Natural killer cell (primary cell): ENCODE measurements at regions of chr10 and their contacts with region 1.

Region 1: DNA sequence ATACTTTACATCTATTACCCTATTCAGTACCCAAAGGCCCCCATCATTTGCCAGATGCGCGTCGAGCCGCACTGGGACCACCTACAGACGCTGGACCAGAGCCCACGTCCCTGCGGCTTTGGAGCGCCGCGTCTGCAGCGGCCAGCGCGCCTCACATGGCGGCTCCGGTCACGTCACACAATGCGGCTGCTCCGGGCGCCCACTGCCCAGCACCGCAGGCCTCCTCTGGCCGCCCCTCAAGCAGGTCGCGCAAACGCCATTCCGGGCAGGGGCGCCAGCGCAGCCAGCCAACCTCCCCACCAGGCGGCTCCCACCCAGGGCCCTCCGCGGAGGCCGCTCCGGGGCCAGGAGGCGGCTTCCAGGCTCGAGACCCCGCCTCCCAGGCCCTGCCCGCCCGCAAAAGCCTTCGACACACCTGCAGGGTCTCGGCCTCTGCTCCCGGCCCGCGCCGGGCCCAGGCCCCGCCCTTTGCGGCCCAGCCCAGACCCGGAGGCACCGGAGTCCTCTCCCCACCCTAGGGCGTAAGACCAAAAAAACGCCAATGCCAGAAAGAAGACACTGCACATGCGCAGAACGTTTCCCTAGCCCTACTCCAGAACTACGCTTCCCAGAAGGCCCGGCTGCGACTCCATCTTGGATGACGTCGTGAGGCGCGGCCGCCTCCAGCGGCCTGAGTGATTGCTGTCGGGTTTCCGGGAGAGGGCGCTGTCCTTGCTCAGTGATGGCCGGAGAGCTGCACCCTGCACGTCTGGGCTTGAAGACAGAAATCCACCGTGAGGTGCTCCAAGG is at the start of gene ZNF25:
- DNase-seq: peak; percentile 90 to 100
- ATAC-seq: peak; percentile 92 to 98 (median 94)
- H3K4me3 ChIP-seq: peak within 1 kb of the TSS; percentile 51
- H3K4me3 Mint-ChIP-seq: peak within 1 kb of the TSS; percentile 92
- H3K27ac ChIP-seq: peak within 1 kb of the TSS; percentile 78
- H3K27ac Mint-ChIP-seq: peak within 1 kb of the TSS; percentile 89 to 97
- H3K4me1 ChIP-seq: peaks cover 6% of the 10 kb centered on the region
- H3K4me1 Mint-ChIP-seq: peaks cover 25 to 38% of the 10 kb centered on the region in 2 donors
- H3K27me3 ChIP-seq: no peaks in the 10 kb centered on the region
- H3K27me3 Mint-ChIP-seq: no peaks in the 10 kb centered on the region
- CTCF ChIP-seq: peak; percentile 80
- total RNA-seq, gene ZNF25: 7.8 to 11.1 (median 8.8) TPM

Region 2: GRCh38 chr10:37857287-37858211 is 118.7 kb before region 1 on chr10 and contains the start of gene ZNF248:
- intact Hi-C with region 1: loop called (anchors 1 kb)
- DNase-seq: peak; percentile 94 to 99
- ATAC-seq: peak; percentile 93 to 98 (median 94)
- H3K4me3 ChIP-seq: peak within 1 kb of the TSS; percentile 82
- H3K4me3 Mint-ChIP-seq: peak within 1 kb of the TSS; percentile 86
- H3K27ac ChIP-seq: peak within 1 kb of the TSS; percentile 85
- H3K27ac Mint-ChIP-seq: peak within 1 kb of the TSS; percentile 87 to 96
- H3K4me1 ChIP-seq: peaks cover 9% of the 10 kb centered on the region
- H3K4me1 Mint-ChIP-seq: peaks cover 21 to 29% of the 10 kb centered on the region in 2 donors
- H3K27me3 ChIP-seq: no peaks in the 10 kb centered on the region
- H3K27me3 Mint-ChIP-seq: no peaks in the 10 kb centered on the region
- CTCF ChIP-seq: no peak
- total RNA-seq, gene ZNF248: 2.8 to 6.3 (median 5.1) TPM

Region 3: GRCh38 chr10:38038107-38038931 is 62.0 kb after region 1 on chr10:
- intact Hi-C with region 1: loop called (anchors 2 kb)
- DNase-seq: peak in 1 of 2 donors; percentile 58
- ATAC-seq: peak; percentile 72 to 92 (median 84)
- H3K4me3 ChIP-seq: peak overlapping the region; percentile 31
- H3K4me3 Mint-ChIP-seq: peak overlapping the region; percentile 87
- H3K27ac ChIP-seq: peak overlapping the region; percentile 81
- H3K27ac Mint-ChIP-seq: peak overlapping the region; percentile 91 to 94
- H3K4me1 ChIP-seq: peaks cover 9% of the 10 kb centered on the region
- H3K4me1 Mint-ChIP-seq: peaks cover 24 to 25% of the 10 kb centered on the region in 2 donors
- H3K27me3 ChIP-seq: no peaks in the 10 kb centered on the region
- H3K27me3 Mint-ChIP-seq: no peaks in the 10 kb centered on the region
- CTCF ChIP-seq: no peak

Region 4: DNA sequence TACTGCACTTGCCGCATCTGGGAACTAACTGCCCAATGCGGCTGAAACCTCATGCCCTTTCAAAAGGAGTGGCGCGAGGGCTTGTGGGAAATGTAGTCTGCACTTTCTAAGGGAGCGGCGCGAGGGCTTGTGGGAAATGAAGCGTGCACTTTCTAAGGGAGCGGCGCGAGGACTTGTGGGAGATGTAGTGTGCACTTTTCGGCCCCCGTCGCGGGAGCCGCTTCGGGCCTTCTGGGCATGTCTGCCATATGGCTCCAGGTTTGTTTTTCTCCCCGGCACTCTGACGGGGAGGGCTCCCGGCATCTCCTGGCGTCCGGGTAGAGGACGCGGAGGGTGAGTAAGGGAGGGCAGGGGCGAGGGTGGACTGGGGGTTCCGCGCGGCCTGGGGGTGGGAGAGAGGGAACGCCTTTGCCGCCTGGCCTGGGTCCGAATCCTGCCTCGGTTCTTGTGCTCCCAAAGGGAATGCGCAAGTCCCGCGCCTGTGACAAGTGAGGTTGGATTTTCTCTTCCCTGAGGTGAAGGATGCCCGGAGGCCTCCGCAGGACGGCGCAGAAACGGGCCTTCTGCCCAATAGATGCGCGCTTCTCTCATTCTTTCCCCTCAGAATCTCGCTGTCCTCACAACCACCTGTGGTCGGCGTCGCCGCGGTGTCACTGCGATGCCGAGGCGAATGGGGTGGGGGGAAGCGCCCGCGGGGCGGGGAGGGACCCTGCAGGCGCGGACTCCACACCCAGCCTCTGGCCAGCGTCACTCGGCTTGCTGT is 118.1 kb after region 1 on chr10 and contains the start of gene ZNF37A:
- intact Hi-C with region 1: loop called (anchors 1 kb)
- DNase-seq: peak; percentile 78 to 95
- ATAC-seq: peak; percentile 92 to 98 (median 95)
- H3K4me3 ChIP-seq: peak within 1 kb of the TSS; percentile 90
- H3K4me3 Mint-ChIP-seq: peak within 1 kb of the TSS; percentile 95
- H3K27ac ChIP-seq: peak within 1 kb of the TSS; percentile 94
- H3K27ac Mint-ChIP-seq: peak within 1 kb of the TSS; percentile 90 to 93
- H3K4me1 ChIP-seq: peaks cover 19% of the 10 kb centered on the region
- H3K4me1 Mint-ChIP-seq: peaks cover 31 to 38% of the 10 kb centered on the region in 2 donors
- H3K27me3 ChIP-seq: no peaks in the 10 kb centered on the region
- H3K27me3 Mint-ChIP-seq: no peaks in the 10 kb centered on the region
- CTCF ChIP-seq: no peak
- total RNA-seq, gene ZNF37A: 11.3 to 22.2 (median 19.5) TPM